ENCODE measurements at regions of chr11 and their contacts with region 1.

Region 1: GRCh38 chr11:119828006-119828405 is 99.0 kb upstream of the NECTIN1 start:
- DNase-seq: no peak
- ATAC-seq: no peak

Region 2: DNA sequence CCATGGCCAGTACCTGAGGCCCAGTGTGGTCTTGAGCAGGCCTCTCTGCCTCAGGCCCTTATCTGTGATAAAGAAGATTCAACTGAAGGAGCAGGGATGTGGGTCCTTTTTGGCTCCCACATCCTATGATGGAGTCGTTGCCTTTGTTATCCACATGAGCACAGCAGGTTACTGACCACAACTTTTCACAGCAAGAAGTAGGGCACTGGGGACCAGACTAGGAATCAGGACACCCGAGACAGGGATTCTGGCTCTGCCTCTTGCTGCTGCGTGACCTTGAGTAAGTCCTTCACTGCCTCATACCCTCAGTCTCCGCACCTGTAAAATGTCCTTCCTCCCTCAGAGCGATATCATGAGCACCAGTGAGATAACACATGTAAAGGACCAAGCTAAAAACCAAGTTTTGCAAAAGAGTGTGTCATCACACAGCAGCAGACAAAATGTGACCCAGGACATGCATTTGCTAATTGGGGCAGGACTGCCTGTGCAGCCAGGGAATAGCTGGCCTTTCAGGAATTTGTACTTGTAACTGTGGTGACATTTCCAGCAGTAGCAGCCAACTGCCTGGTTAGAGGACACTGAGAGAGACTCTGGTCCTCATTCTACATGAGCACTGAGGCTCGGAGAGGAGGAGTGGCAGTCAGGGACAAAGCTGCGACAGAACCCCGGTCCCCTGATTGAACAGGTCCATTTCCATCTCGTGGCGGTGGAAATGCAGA is 1728.0 kb before region 1 on chr11:
- intact Hi-C with region 1: loop called (anchors 5 kb)
- DNase-seq: peak; percentile 15
- ATAC-seq: no peak

Region 3: GRCh38 chr11:119810478-119811232 is 17.4 kb before region 1 on chr11:
- intact Hi-C with region 1: no loop called
- DNase-seq: no peak
- ATAC-seq: no peak

Region 4: GRCh38 chr11:119902656-119903231 is 74.7 kb after region 1 on chr11:
- intact Hi-C with region 1: no loop called
- DNase-seq: no peak
- ATAC-seq: no peak

Region 5: DNA sequence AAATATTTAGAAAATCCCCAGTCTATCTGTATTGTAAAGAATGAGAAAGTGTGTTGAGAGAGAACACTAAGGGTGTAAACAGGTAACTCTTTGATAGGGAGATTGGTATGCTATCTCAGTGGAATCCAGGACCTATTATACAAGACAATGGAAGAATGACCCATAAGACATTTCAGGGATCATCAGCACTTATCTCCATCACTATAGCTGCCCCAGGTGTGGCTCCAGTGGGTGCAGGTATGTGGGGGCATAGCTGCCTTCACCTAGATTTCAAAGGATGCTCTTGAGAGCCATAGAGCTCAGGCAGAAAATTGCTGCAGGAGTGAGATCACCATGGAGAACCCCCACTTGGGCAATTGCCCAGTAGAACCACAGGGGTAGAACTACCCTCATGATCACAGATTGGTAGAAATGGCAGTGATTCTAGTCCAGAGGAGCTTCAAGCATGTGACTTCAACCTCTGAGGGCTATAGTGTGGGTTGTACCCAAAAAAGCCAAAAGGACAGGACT is 943.6 kb after region 1 on chr11:
- intact Hi-C with region 1: no loop called
- DNase-seq: no peak
- ATAC-seq: no peak

Measured in sciatic nerve (tissue), 2 donors.